OCI-LY7 (cell line): ENCODE measurements at regions of chr22 and their contacts with region 1.

Region 1: GRCh38 chr22:22959147-22959827 is 71.7 kb downstream of the IGLL5 start:
- DNase-seq: peak; percentile 93
- H3K4me3 ChIP-seq: no peak overlapping the region
- H3K27ac ChIP-seq: no peak overlapping the region
- H3K4me1 ChIP-seq: peaks cover 35% of the 10 kb centered on the region
- CTCF ChIP-seq: peak; percentile 100

Region 2: DNA sequence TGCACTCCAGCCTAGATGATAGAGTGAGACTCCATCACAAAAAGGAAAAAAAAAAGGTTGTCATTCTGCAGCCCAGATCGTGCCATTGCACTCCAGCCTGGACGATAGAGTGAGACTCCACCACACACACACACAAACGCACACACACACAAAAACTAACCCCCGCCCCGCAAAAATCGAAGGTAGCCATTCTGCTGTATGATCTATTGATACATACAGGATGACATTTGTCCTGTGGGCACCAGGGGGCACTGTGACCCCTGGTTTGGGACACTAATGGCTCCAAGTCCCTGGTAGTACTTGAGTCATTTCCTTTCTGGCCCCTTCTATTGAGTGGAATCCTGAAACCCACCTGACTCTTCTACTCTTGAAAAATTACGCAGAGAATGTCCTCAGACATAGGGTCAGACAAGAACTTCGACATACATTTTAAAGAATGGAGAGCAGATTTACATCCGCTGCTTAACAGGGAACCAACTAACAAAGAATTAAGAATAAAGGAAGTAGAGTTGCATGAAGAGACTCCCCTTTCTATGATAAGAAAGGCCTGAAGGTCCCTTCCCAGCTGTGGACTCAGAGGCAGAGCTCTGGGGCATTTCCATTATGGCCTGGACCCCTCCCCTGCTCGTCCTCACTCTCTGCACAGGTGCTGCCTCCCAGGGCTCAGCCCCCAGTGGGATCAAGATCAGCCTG is 365.2 kb before region 1 on chr22:
- CTCF ChIA-PET with region 1: no interaction called
- POLR2A ChIA-PET with region 1: no interaction called
- intact Hi-C with region 1: loop called (anchors 10 kb)
- DNase-seq: peak; percentile 84
- H3K4me3 ChIP-seq: no peak overlapping the region
- H3K27ac ChIP-seq: no peak overlapping the region
- H3K4me1 ChIP-seq: peaks cover 14% of the 10 kb centered on the region
- CTCF ChIP-seq: peak; percentile 96

Region 3: DNA sequence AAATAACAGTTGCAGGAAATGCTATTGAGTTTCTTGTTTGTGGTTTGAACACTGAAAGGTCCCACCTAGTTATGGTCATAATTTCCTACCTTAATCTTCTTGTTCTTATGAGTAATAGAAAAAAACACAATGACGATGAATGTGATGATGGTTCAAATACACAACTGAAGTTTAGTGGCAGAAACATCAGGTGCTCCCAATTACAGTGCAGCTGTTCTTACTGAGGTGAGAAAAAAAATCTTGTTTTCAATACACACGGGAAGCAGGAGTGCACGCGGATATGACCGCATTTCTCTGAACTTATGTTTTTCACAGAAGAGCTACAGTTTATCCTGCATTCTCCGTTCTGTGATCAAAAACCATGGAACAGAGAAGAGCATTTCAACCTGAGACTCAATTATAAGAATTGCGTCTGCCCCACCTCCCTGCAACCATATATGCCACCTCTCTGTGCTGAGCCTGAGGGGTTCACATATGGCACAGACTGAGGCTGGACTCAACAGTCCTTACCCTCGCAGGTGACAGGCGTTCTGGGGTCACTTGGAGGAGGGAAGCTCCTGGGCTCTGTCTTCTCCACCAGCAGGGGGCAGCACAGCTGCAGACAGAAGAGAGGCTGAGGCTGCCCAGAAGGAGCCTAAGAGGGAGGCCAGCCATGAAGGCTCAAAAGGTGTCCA is 171.4 kb before region 1 on chr22:
- CTCF ChIA-PET with region 1: no interaction called
- POLR2A ChIA-PET with region 1: no interaction called
- intact Hi-C with region 1: loop called (anchors 1 kb)
- DNase-seq: peak; percentile 82
- H3K4me3 ChIP-seq: no peak overlapping the region
- H3K27ac ChIP-seq: no peak overlapping the region
- H3K4me1 ChIP-seq: no peaks in the 10 kb centered on the region
- CTCF ChIP-seq: peak; percentile 98

Region 4: GRCh38 chr22:22855617-22856308 is 103.5 kb before region 1 on chr22:
- CTCF ChIA-PET with region 1: interaction called, 23 read pairs
- POLR2A ChIA-PET with region 1: interaction called, 5 read pairs
- intact Hi-C with region 1: loop called (anchors 1 kb)
- DNase-seq: peak; percentile 82
- H3K4me3 ChIP-seq: no peak overlapping the region
- H3K27ac ChIP-seq: peak overlapping the region; percentile 14
- H3K4me1 ChIP-seq: peaks cover 70% of the 10 kb centered on the region
- CTCF ChIP-seq: peak; percentile 91

Region 5: GRCh38 chr22:22942511-22943329 is 16.6 kb before region 1 on chr22:
- CTCF ChIA-PET with region 1: interaction called, 13 read pairs
- POLR2A ChIA-PET with region 1: interaction called, 6 read pairs
- intact Hi-C with region 1: no loop called
- DNase-seq: peak; percentile 89
- H3K4me3 ChIP-seq: peak overlapping the region; percentile 14
- H3K27ac ChIP-seq: peak overlapping the region; percentile 90
- H3K4me1 ChIP-seq: peaks cover 93% of the 10 kb centered on the region
- CTCF ChIP-seq: peak; percentile 98

Region 6: DNA sequence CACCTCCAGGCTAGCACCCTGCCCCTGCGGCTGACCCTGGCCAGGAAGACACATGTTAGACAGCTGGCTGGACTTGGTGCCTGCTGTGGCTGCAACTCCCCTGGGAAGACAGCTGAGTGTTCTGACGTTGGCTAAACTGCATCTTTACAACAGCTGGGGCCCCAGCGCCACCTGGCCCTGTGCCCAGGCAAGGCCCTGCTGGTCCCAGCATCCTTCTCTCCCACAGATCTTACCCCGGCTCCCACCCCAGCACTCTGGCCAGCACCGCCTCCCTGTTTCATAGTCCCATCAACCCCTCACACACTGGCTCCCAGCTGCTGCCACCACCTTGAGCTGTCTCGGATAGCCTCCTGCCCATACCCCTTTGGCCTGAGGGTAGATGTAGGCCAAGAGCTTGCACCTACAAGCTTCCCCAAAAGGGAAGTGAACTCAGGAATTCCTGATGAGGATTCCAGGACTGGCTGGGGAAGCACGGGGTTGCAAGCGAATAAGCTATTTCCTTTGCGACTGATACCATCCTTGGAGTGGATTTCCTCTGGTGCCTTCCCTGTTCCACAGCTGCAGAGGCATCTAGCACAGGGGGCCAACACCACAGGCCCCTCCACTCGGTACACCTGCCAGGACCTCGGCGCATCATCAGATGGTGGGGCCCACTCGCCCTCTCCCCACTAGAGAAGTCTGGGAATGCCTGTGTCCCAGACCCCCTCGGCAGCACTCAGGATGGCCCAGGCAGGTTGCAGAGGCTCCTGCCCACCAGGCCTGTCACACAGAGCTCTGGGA is 154.0 kb after region 1 on chr22:
- CTCF ChIA-PET with region 1: interaction called, 23 read pairs
- POLR2A ChIA-PET with region 1: interaction called, 5 read pairs
- intact Hi-C with region 1: loop called (anchors 1 kb)
- DNase-seq: peak; percentile 84
- H3K4me3 ChIP-seq: no peak overlapping the region
- H3K27ac ChIP-seq: no peak overlapping the region
- H3K4me1 ChIP-seq: peaks cover 29% of the 10 kb centered on the region
- CTCF ChIP-seq: peak; percentile 48; the same call in 1 of the 2 replicates

Region 7: GRCh38 chr22:23163665-23164064 is 204.4 kb after region 1 on chr22:
- CTCF ChIA-PET with region 1: no interaction called
- POLR2A ChIA-PET with region 1: no interaction called
- intact Hi-C with region 1: no loop called
- DNase-seq: no peak
- H3K4me3 ChIP-seq: no peak overlapping the region
- H3K27ac ChIP-seq: no peak overlapping the region
- H3K4me1 ChIP-seq: no peaks in the 10 kb centered on the region
- CTCF ChIP-seq: no peak

Region 8: DNA sequence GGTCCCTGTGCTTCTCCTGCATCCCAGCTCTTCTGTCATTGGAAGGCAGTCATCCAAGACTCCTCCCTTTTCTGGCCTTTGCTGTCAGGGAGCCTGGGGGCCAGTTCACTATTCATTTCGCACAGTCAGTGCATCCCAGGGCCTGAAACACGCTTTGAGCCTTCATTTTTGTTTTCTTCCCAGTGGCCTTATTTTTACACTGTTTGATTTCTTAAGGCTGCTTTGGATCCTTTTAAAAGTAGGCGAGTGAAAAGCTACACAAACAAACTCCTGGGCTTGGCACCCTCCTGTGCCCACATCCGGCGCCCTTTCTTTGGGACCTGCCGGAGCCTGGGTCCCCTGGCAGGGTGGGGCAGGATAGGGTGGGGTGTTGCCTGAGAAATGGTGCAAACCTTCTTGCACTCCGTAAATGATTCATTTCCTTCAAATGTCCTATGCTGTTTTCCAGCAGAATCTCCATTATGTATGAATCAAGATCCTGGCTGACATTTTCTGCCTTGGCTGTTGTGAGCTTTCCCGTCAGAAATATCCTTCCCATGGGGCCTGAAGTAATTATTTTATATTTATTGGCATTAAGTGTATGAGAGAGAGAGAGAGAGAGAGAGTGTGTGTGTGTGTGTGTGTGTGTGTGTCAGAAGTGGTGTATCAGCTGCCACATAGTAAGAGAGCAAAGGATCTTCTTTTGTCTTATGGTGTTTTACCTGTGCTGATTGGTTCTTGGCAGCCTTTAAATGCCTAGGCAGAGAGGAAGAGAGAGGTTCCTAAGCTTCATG is 266.6 kb after region 1 on chr22:
- CTCF ChIA-PET with region 1: no interaction called
- POLR2A ChIA-PET with region 1: no interaction called
- intact Hi-C with region 1: no loop called
- DNase-seq: no peak
- H3K4me3 ChIP-seq: no peak overlapping the region
- H3K27ac ChIP-seq: no peak overlapping the region
- H3K4me1 ChIP-seq: peaks cover 7% of the 10 kb centered on the region
- CTCF ChIP-seq: no peak

Region 9: DNA sequence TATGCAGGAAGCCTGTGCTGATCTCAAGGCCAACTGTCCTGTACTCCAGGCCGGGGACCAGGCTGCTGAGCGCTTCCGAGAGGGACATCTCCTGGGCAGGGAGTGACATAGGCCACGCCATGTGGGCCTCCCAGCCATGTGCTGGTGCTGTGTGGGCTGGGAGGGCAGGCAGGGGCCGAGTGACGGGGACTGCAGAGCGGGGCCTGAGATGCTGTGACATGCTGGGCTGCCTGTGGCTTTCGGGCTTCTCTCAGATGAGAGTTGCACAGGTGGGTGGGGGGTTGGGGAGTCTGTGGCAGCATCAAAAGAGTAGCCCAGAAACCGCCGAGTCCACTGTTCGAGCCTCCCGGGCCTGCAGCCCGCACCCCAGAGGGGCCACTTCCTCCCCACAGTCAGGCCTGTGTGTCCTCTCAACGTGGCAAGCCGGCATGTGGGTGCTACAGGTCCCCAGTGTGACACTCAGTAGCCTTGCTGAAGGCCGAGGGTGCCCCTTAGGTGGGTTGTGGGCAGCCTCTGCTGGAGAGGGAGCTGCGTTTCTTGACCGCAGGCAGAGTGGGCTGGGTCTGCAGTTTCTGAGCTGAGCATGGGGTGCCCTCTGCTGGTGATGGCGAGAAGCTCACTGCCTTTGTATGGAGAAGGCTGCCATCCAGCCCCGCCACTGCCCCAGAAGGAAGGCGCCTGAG is 322.3 kb after region 1 on chr22:
- CTCF ChIA-PET with region 1: no interaction called
- POLR2A ChIA-PET with region 1: no interaction called
- intact Hi-C with region 1: loop called (anchors 5 kb)
- DNase-seq: peak; percentile 89
- H3K4me3 ChIP-seq: no peak overlapping the region
- H3K27ac ChIP-seq: peak overlapping the region; percentile 5
- H3K4me1 ChIP-seq: peaks cover 16% of the 10 kb centered on the region
- CTCF ChIP-seq: peak; percentile 93